Uterus (tissue), 4 donors: ENCODE measurements at regions of chr5 and their contacts with region 1.

Region 1: DNA sequence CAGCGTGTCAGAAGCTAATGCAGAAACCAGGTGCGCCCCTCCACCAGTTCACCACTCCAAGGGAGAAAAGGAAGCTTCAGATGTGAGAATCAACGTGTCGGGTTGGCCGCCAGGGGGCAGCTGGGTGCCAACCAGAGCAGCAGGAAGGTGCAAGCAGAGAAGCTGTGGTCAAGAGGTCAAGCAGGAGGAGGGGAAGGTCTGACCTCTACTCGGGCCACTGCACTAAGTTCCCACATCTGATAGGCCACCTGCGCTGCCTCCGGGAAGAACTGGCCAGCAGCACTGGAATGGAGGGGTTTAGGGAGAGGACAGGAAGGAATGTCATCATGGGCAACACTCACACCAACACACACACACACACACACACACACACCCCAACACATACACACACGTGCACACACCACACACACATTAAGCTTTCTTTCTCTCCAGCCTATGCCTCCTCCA is 31.4 kb downstream of the ANXA6 start:
- DNase-seq: peak; percentile 69 to 75
- H3K4me3 ChIP-seq: no peak overlapping the region
- H3K27ac ChIP-seq: no peak overlapping the region
- H3K4me1 ChIP-seq: no peaks in the 10 kb centered on the region
- H3K27me3 ChIP-seq: no peaks in the 10 kb centered on the region
- CTCF ChIP-seq: peak; percentile 81 to 90 (median 84)
- POLR2A ChIP-seq: no peak

Region 2: DNA sequence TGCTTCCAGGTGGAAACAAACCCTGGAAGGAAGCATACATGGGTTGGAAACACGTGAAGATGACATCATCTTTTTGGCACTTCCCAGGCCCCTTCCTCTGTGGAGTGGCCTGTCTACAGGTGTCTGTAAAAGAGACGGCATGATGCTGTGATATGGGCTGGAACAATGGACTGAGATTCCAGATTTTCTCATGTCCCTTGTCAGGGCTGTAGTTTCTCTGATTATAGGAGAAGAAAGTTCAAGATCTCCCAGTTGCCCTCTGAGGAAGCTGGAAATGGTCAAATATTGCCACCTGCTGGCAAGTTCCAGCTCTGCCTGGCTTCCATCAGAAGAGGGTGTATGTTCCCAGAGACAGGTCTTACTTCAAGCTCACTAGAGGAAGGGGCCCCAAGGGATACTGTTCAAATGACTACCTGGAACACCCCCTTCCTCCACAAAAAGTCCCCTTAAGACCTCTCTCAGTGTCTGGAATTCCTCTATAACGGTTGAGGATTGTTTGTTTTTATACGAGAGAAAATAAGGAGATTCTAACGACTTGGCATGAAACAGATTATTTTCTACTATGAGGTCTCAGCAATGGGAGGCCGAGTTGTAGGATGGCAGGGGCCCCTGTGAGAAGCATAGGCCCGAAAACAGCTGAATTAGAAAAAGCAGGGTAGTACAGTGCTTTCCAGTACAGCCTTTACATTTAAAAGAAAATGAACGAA is 38.6 kb after region 1 on chr5:
- intact Hi-C with region 1: loop called (anchors 2 kb)
- DNase-seq: peak; percentile 82
- H3K4me3 ChIP-seq: no peak overlapping the region
- H3K27ac ChIP-seq: peak overlapping the region in 1 of 2 donors; percentile 22
- H3K4me1 ChIP-seq: peaks cover 0 to 4% of the 10 kb centered on the region in 2 donors
- H3K27me3 ChIP-seq: no peaks in the 10 kb centered on the region
- CTCF ChIP-seq: peak; percentile 87 to 94 (median 88)
- POLR2A ChIP-seq: no peak

Region 3: GRCh38 chr5:151239237-151239861 is 113.1 kb after region 1 on chr5:
- intact Hi-C with region 1: loop called (anchors 10 kb)
- DNase-seq: peak; percentile 85 to 87
- H3K4me3 ChIP-seq: peak overlapping the region; percentile 11 to 14
- H3K27ac ChIP-seq: peak overlapping the region; percentile 74 to 77
- H3K4me1 ChIP-seq: peaks cover 0 to 8% of the 10 kb centered on the region in 2 donors
- H3K27me3 ChIP-seq: no peaks in the 10 kb centered on the region
- CTCF ChIP-seq: peak; percentile 60 to 92 (median 80)
- POLR2A ChIP-seq: no peak

Region 4: DNA sequence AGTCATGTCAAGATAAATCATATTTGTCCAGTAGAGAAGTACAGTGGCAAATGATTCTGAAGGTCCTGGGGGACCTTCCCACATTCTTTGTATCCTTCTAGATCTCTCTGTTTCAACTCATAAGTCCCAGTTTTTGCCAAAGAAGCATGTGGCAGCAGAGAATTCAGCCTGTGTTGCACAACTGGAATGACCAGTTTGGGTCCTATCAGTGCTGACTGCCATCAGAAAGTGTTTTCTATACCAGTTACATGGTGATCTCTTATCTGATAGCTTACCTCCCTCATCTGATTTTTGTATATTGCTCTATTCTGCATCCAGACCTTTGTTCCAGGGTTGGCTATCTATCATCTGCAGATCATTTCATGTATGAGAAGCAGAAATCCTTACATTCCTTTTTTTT is 148.4 kb after region 1 on chr5:
- intact Hi-C with region 1: no loop called
- DNase-seq: no peak
- H3K4me3 ChIP-seq: no peak overlapping the region
- H3K27ac ChIP-seq: no peak overlapping the region
- H3K4me1 ChIP-seq: no peaks in the 10 kb centered on the region
- H3K27me3 ChIP-seq: no peaks in the 10 kb centered on the region
- CTCF ChIP-seq: no peak
- POLR2A ChIP-seq: no peak